ENCODE measurements at regions of chr16 and their contacts with region 1.

Region 1: GRCh38 chr16:19696328-19696727 is 21.7 kb downstream of the KNOP1 start:
- DNase-seq: peak; percentile 67
- H3K4me3 ChIP-seq: no peak overlapping the region
- H3K27ac ChIP-seq: peak overlapping the region; percentile 65
- H3K27me3 ChIP-seq: no peaks in the 10 kb centered on the region
- CTCF ChIP-seq: no peak

Region 2: DNA sequence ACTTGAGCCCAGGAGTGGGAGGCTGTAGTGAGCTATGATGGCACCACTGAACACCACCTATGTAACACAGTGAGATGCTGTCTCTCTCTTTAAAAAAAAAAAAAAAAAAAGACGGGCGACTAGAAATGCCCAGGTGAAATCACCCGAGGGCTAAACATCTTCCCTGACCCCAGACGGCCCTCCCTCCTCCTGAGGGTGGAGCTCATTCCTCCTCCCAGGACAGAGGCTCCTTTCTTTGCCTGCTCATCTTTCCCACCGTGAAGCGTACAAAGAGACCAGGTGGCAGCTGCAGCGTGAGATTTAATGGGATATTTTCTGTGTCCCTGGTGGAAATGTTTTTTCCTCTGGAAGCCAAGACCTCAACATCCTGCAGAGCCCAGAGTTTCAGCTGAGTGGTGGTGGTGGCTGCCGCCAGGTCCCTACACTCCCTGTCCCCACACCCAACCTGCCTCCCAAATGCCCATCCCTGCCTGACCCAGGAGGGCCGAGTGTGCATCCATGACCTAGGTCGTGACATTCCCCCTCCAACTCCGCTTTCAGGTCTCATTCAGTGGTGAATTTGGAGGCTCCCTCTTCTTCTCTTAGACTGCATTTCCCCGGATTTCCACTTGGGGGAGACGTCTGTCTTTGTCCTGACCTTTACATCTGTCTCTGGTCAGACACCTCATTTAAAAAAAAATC is 202.7 kb after region 1 on chr16:
- CTCF ChIA-PET with region 1: interaction called, 13 read pairs
- POLR2A ChIA-PET with region 1: no interaction called
- DNase-seq: no peak
- H3K4me3 ChIP-seq: no peak overlapping the region
- H3K27ac ChIP-seq: no peak overlapping the region
- H3K27me3 ChIP-seq: peaks cover 3% of the 10 kb centered on the region
- CTCF ChIP-seq: peak; percentile 87